CD8-positive, alpha-beta memory T cell (primary cell): ENCODE measurements at regions of chr13 and their contacts with region 1.

Region 1: DNA sequence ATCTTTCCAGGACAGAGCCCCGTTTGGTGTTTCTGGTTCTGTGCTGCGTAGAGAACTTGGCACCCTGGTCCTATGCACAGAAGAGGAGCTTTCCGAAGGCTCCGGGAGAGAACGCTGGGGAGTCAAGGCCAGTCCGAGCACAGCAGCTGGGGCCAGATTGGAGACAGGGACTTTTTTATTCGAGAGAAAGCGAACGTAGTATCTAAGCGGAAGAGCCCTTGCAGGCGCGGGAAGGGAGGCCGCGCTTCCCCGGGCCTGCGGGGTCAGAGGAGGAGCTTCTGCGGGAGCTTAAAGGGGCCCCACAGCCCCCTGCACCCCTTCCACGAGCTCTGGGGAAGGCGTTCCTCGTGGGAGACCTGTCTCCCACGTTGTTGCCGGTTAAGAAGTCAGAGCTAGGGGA is 48.6 kb upstream of the ARHGEF7 start:
- DNase-seq: no peak
- H3K4me3 ChIP-seq: no peak overlapping the region
- H3K4me3 Mint-ChIP-seq: peak overlapping the region; percentile 33 to 66 (median 64)
- H3K27ac ChIP-seq: no peak overlapping the region
- H3K27ac Mint-ChIP-seq: peak overlapping the region in 1 of 8 donors; percentile 1
- H3K4me1 ChIP-seq: no peaks in the 10 kb centered on the region
- H3K4me1 Mint-ChIP-seq: peaks cover 3 to 10% (median 5%) of the 10 kb centered on the region in 3 donors
- H3K27me3 ChIP-seq: peaks cover 6% of the 10 kb centered on the region
- H3K27me3 Mint-ChIP-seq: peaks cover 48 to 74% of the 10 kb centered on the region in 2 donors

Region 2: GRCh38 chr13:111177081-111177711 is 110.7 kb after region 1 on chr13:
- CTCF ChIA-PET with region 1: no interaction called
- POLR2A ChIA-PET with region 1: no interaction called
- DNase-seq: peak; percentile 39 to 83 (median 70)
- H3K4me3 ChIP-seq: no peak overlapping the region
- H3K4me3 Mint-ChIP-seq: peak overlapping the region; percentile 16 to 81 (median 59)
- H3K27ac ChIP-seq: no peak overlapping the region
- H3K27ac Mint-ChIP-seq: peak overlapping the region; percentile 90 to 99 (median 96)
- H3K4me1 ChIP-seq: peaks cover 79% of the 10 kb centered on the region
- H3K4me1 Mint-ChIP-seq: peaks cover 71 to 93% (median 87%) of the 10 kb centered on the region in 3 donors
- H3K27me3 ChIP-seq: no peaks in the 10 kb centered on the region
- H3K27me3 Mint-ChIP-seq: no peaks in the 10 kb centered on the region

Region 3: GRCh38 chr13:111202745-111203144 is 136.2 kb after region 1 on chr13:
- CTCF ChIA-PET with region 1: interaction called, 11 read pairs
- POLR2A ChIA-PET with region 1: no interaction called
- DNase-seq: peak in 1 of 5 donors; percentile 62
- H3K4me3 ChIP-seq: no peak overlapping the region
- H3K4me3 Mint-ChIP-seq: no peak overlapping the region
- H3K27ac ChIP-seq: no peak overlapping the region
- H3K27ac Mint-ChIP-seq: peak overlapping the region in 5 of 8 donors; percentile 17 to 61 (median 42)
- H3K4me1 ChIP-seq: peaks cover 34% of the 10 kb centered on the region
- H3K4me1 Mint-ChIP-seq: peaks cover 64 to 85% (median 68%) of the 10 kb centered on the region in 3 donors
- H3K27me3 ChIP-seq: no peaks in the 10 kb centered on the region
- H3K27me3 Mint-ChIP-seq: peaks cover 0 to 3% of the 10 kb centered on the region in 2 donors

Region 4: DNA sequence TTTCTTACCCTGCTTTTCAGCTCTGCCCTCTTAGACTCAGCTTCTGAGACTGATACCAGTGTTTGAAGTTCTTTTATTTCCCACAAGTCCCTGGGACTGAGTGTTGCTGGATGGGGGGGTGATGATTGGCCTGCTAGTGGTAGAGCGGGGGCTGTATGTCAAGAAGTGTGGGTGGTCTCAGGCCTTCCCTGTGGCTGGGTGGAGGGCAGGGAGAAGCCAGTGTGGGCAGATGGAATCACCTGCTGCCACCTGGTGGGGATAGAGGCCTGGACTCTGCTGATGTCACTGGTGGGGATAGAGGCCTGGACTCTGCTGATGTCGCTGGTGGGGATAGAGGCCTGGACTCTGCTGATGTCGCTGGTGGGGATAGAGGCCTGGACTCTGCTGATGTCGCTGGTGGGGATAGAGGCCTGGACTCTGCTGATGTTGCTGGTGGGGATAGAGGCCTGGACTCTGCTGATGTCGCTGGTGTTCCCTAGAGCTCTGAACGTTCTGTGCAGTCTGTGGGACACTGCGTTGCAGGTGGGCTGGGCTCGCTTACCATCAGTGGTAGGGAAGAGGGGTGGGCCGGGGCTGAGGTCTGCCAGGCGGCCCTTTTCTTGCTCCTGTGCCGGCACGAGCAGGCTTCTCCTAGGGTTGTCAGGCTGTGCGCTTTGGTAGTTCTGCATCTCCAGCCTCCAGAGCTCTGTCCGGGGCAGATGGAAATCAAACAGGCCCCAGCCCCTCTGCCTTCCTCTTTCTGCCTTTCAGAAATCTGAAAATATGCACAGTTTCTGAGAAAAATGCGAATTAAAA is 149.8 kb after region 1 on chr13:
- CTCF ChIA-PET with region 1: interaction called, 79 read pairs
- POLR2A ChIA-PET with region 1: no interaction called
- DNase-seq: peak in 4 of 5 donors; percentile 2 to 56 (median 24)
- H3K4me3 ChIP-seq: no peak overlapping the region
- H3K4me3 Mint-ChIP-seq: no peak overlapping the region
- H3K27ac ChIP-seq: no peak overlapping the region
- H3K27ac Mint-ChIP-seq: peak overlapping the region in 4 of 8 donors; percentile 34 to 81 (median 78)
- H3K4me1 ChIP-seq: no peaks in the 10 kb centered on the region
- H3K4me1 Mint-ChIP-seq: peaks cover 36 to 64% (median 54%) of the 10 kb centered on the region in 3 donors
- H3K27me3 ChIP-seq: no peaks in the 10 kb centered on the region
- H3K27me3 Mint-ChIP-seq: no peaks in the 10 kb centered on the region

Region 5: DNA sequence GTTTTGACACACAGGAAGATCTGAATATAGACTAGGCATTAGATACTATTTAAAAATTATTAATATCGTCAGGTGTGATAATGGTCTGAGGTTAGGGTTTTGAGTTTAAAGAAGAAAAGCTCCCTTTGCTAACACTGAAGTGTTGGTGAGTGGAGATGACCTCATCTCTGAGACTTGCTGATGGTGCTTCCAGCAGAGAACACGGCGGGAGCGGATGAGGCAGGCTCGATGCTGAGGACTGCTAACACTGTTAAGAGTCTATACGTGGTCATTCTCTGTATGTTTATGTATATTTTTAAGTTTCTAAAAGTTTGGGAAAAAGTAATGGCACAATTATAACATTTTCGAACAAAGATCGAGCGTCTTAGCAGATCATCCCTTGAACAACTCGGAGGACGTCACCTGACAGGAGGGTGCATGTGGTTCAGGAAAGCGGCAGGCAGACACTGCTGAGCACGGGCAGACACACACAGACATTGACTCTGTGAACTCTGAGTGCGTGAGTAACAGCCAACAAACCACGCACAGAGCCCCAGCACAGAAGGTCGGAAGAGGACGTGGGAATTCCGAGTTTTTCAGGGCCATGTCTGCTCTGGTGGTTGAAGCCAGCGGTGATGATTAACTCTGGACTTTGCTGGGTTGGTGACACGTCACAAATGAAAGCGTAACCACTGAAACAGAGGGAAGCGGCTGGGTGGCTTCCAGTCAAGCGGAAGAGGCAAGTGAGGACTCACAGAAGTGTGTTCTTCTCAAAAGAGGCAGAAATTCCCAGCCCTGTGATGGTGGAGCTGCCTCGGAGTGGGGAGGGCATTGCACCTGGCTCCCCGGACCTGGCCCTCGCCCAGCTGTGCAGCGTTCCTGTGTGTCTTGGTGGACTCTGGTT is 162.0 kb after region 1 on chr13:
- CTCF ChIA-PET with region 1: interaction called, 31 read pairs
- POLR2A ChIA-PET with region 1: no interaction called
- DNase-seq: no peak
- H3K4me3 ChIP-seq: no peak overlapping the region
- H3K4me3 Mint-ChIP-seq: no peak overlapping the region
- H3K27ac ChIP-seq: no peak overlapping the region
- H3K27ac Mint-ChIP-seq: no peak overlapping the region
- H3K4me1 ChIP-seq: no peaks in the 10 kb centered on the region
- H3K4me1 Mint-ChIP-seq: peaks cover 37 to 55% (median 39%) of the 10 kb centered on the region in 3 donors
- H3K27me3 ChIP-seq: no peaks in the 10 kb centered on the region
- H3K27me3 Mint-ChIP-seq: no peaks in the 10 kb centered on the region